Transverse colon (tissue), 4 donors: ENCODE measurements at regions of chr11 and their contacts with region 1.

Region 1: GRCh38 chr11:83193315-83194280 is at the start of gene ANKRD42:
- DNase-seq: peak; percentile 93
- H3K4me3 ChIP-seq: peak within 1 kb of the TSS; percentile 36 to 86 (median 64)
- H3K27ac ChIP-seq: peak within 1 kb of the TSS; percentile 91 to 97 (median 93)
- H3K4me1 ChIP-seq: peaks cover 9 to 41% (median 22%) of the 10 kb centered on the region in 4 donors
- H3K27me3 ChIP-seq: no peaks in the 10 kb centered on the region
- CTCF ChIP-seq: peak in 1 of 5 experiments; percentile 31
- EP300 ChIP-seq: no peak
- POLR2A ChIP-seq: peak; percentile 82
- total RNA-seq, gene ANKRD42: 5.6 to 11.5 (median 8.9) TPM

Region 2: GRCh38 chr11:83087035-83087434 is 106.6 kb before region 1 on chr11:
- in situ Hi-C with region 1: loop called in 1 of 4 experiments (anchors 25 kb)
- intact Hi-C with region 1: no loop called
- DNase-seq: no peak
- H3K4me3 ChIP-seq: no peak overlapping the region
- H3K27ac ChIP-seq: no peak overlapping the region
- H3K4me1 ChIP-seq: peaks cover 0 to 15% (median 3%) of the 10 kb centered on the region in 4 donors
- H3K27me3 ChIP-seq: no peaks in the 10 kb centered on the region
- CTCF ChIP-seq: peak in 4 of 5 experiments; percentile 21 to 52 (median 41)
- EP300 ChIP-seq: no peak
- POLR2A ChIP-seq: no peak